ENCODE measurements at regions of chr2 and their contacts with region 1.

Region 1: DNA sequence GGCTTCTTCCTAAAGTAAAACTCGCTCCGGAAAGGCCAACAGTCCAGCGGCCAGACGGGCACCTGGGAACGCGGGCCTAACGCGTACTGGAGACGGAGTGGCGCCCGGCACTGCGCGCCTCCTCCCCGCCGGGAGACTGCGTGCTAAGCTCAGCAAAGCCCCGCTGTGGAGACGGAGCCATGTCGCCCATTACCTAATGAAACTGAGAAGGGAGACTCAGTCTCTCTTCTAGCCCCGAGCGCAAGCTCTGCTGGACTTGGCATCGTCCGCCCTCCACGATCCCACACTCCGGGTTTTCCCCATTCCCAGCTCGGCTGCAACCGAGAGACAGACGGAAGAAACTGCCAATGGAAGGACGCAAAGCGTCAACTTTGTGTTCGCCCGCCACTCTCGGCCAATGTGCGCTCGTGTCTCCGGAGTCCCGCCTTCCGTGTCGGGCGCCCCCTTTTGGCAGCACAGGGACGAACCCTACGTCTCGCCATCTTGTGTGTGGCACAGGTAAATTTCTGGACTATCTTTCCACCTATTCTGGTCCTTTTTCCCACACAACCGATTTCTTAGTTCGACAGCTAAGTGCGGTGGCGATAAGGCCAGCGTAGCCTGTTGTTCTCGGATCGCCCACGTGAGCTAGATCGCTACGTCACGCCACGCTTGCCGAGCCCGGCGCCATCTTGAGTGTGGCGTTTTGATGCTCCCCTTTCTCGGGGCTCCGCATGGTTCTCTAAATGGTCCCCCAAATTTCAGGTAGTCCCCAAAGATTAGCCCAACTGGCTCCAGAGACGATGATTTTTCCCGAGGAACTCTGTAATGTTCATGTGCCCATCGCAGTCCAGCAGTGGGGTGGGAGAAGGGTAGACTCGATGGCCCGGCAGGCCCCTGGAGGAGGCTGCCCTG is 1.3 kb upstream of the PTMA start:
- DNase-seq: peak; percentile 96 to 99 (median 98)
- H3K4me3 ChIP-seq: peak overlapping the region; percentile 73 to 100 (median 97)
- H3K27ac ChIP-seq: peak overlapping the region; percentile 97 to 100 (median 100)
- H3K27me3 ChIP-seq: no peaks in the 10 kb centered on the region
- CTCF ChIP-seq: peak; percentile 84 to 98 (median 93)

Region 2: DNA sequence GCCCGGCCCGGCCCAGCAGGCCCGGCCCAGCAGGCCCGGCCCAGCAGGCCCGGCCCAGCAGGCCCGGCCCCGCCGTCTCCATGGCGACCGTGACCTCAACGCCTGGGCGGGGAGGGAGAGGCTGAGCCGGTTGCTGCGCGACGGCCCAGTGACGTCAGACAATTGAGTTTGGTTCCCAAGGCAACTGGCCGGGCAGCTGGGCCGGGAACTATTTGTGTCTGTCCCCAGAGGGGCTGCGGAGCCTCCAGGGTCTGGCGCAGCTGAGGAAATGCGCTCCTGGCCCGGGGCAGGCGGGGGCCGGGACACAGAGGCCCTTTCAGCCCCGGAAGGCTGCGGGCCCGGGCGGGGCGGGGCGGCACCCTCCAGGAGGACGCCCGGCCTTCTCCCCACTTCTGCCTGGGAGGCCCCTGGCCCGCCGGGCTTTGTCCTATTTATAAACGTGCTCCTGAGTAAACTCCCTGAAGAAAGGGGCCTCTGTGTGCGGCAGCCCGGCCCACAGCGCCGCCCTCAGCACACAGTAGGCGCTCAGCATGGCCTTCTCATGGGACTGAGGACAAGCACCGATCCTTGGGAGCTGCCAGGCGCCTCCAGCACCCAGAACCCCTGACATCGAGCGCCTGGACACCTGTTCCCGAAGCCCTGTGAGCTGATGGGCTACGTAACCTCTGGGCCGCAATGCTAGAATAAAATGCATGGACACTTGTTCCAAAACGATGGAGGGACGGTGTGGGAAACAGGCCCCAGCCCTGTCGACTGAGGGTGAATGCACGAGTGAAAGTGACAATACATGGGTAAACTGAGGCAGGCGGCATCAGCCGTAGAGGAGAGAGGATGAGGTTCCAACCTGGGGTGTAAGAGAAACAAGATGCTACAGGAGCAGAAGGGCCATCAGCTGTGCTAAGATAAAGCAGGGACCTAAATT is 102.0 kb before region 1 on chr2:
- intact Hi-C with region 1: loop called (anchors 1 kb)
- DNase-seq: peak; percentile 99 to 100 (median 100)
- H3K4me3 ChIP-seq: peak overlapping the region; percentile 8 to 71 (median 59)
- H3K27ac ChIP-seq: peak overlapping the region; percentile 96 to 100 (median 100)
- H3K27me3 ChIP-seq: no peaks in the 10 kb centered on the region
- CTCF ChIP-seq: peak in 49 of 56 donors; percentile 16 to 72 (median 45)

Region 3: GRCh38 chr2:231662028-231662810 is 44.8 kb before region 1 on chr2:
- intact Hi-C with region 1: loop called (anchors 1 kb)
- DNase-seq: peak; percentile 85 to 96 (median 94)
- H3K4me3 ChIP-seq: peak overlapping the region; percentile 13 to 84 (median 61)
- H3K27ac ChIP-seq: peak overlapping the region; percentile 92 to 100 (median 99)
- H3K27me3 ChIP-seq: no peaks in the 10 kb centered on the region
- CTCF ChIP-seq: peak in 37 of 56 donors; percentile 8 to 63 (median 35)

Region 4: DNA sequence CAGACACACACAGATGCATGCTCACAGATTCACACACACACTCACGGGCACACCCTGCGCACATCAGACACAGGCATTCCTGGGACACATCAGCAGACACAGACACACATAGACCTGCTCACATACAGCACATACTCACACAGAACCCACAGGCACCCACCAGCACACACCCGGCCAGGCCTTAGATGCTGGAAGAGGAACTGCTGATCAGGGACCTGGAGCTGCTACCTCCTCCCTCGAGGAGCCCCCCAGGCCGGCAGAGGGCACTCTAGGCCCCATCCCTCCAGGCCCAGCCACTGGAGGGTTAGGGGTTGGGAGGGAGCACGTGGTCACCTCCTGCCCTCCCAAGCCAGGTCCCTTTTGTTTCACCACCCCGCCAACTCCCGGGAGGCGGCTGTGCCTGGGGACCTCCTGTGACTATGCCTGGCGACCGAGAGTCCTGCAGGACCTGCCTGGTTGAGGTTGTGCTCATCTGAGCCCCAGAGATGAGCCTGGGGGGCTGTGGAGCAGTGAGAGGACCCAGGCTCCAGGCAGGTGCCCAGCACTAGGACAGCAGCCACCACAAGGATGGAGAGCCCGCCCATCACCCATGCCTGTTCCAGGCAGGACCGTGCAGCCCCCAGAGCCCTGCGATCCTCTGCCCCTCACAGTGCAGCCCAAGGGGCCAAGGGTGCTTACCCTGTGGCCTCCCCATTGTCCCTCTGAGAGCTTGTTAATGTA is 19.7 kb before region 1 on chr2:
- intact Hi-C with region 1: loop called (anchors 1 kb)
- DNase-seq: peak in 9 of 10 donors; percentile 72 to 90 (median 83)
- H3K4me3 ChIP-seq: peak overlapping the region in 58 of 59 donors; percentile 14 to 74 (median 50)
- H3K27ac ChIP-seq: peak overlapping the region; percentile 94 to 100 (median 98)
- H3K27me3 ChIP-seq: no peaks in the 10 kb centered on the region
- CTCF ChIP-seq: peak in 55 of 56 donors; percentile 51 to 89 (median 76)

Region 5: DNA sequence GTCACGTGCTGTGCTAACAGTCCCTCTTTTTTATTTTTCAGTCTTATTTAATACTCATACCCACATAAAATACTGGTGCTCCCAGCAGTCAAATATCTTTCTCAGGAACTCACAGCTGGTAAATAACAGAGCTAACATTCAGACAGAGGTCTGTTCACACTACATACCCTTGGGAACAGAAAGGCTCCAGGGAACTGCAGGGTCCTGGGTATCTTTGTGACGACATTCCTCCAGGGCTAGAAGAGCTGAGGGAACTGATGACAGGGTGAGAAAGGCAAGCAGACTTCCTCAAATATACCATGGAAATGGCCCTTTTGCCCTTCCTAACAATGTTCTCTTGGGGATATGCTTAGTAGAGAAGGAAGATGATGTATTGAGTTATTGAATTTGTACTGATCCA is 54.8 kb after region 1 on chr2:
- intact Hi-C with region 1: no loop called
- DNase-seq: no peak
- H3K4me3 ChIP-seq: no peak overlapping the region
- H3K27ac ChIP-seq: no peak overlapping the region
- H3K27me3 ChIP-seq: no peaks in the 10 kb centered on the region
- CTCF ChIP-seq: no peak

Measured in dorsolateral prefrontal cortex (tissue), 120 donors.